ENCODE measurements at regions of chr2 and their contacts with region 1.

Region 1: GRCh38 chr2:40653829-40654228 is 201.9 kb upstream of the SLC8A1 start:
- DNase-seq: peak; percentile 95
- ATAC-seq: peak; percentile 90
- H3K4me3 ChIP-seq: no peak overlapping the region
- H3K27ac ChIP-seq: peak overlapping the region; percentile 81
- H3K4me1 ChIP-seq: peaks cover 31% of the 10 kb centered on the region
- H3K27me3 ChIP-seq: no peaks in the 10 kb centered on the region
- CTCF ChIP-seq: no peak

Region 2: DNA sequence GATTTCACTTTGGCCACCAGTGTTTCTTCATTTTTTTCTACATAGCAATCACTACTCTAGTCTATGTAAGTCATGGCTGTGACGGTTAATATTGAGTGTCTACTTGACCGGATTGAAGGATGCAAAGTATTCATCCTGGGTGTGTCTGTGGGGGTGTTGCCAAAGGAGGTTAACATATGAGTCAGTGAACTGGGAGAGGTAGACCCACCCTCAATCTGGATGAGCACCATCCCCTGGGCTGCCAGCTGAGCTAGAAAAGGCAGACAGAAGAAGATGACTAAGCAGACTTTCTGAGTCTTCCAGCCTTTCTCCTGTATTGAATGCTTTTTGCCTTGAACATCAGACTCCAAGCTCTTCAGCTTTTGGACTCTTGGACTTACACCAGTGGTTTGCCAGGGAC is 63.0 kb after region 1 on chr2:
- CTCF ChIA-PET with region 1: no interaction called
- POLR2A ChIA-PET with region 1: no interaction called
- intact Hi-C with region 1: no loop called
- DNase-seq: peak; percentile 95
- ATAC-seq: peak; percentile 89
- H3K4me3 ChIP-seq: peak overlapping the region; percentile 3; the same call in 1 of the 2 replicates
- H3K27ac ChIP-seq: peak overlapping the region; percentile 50
- H3K4me1 ChIP-seq: peaks cover 26% of the 10 kb centered on the region
- H3K27me3 ChIP-seq: no peaks in the 10 kb centered on the region
- CTCF ChIP-seq: no peak

Region 3: GRCh38 chr2:40734797-40735196 is 81.0 kb after region 1 on chr2:
- CTCF ChIA-PET with region 1: no interaction called
- POLR2A ChIA-PET with region 1: no interaction called
- intact Hi-C with region 1: loop called (anchors 5 kb)
- DNase-seq: peak; percentile 70
- ATAC-seq: peak; percentile 54
- H3K4me3 ChIP-seq: no peak overlapping the region
- H3K27ac ChIP-seq: 0 out of 2 replicates have a peak overlapping the region, but pooled peaks have one; percentile 1
- H3K4me1 ChIP-seq: peaks cover 48% of the 10 kb centered on the region
- H3K27me3 ChIP-seq: no peaks in the 10 kb centered on the region
- CTCF ChIP-seq: no peak

Region 4: GRCh38 chr2:40877734-40878288 is 224.0 kb after region 1 on chr2:
- CTCF ChIA-PET with region 1: no interaction called
- POLR2A ChIA-PET with region 1: no interaction called
- intact Hi-C with region 1: loop called (anchors 1 kb)
- DNase-seq: peak; percentile 69
- ATAC-seq: peak; percentile 68
- H3K4me3 ChIP-seq: no peak overlapping the region
- H3K27ac ChIP-seq: peak overlapping the region; percentile 78
- H3K4me1 ChIP-seq: peaks cover 34% of the 10 kb centered on the region
- H3K27me3 ChIP-seq: no peaks in the 10 kb centered on the region
- CTCF ChIP-seq: no peak

Measured in PC-3 (cell line).